ENCODE measurements at regions of chr3 and their contacts with region 1.

Region 1: GRCh38 chr3:36868614-36869436 is 76.0 kb downstream of the TRANK1 start:
- DNase-seq: peak; percentile 35 to 89
- H3K4me3 ChIP-seq: no peak overlapping the region
- H3K27ac ChIP-seq: no peak overlapping the region
- H3K4me1 ChIP-seq: no peaks in the 10 kb centered on the region
- H3K27me3 ChIP-seq: no peaks in the 10 kb centered on the region
- CTCF ChIP-seq: peak in 5 of 7 experiments; percentile 23 to 79 (median 71)
- EP300 ChIP-seq: no peak
- POLR2A ChIP-seq: no peak

Region 2: DNA sequence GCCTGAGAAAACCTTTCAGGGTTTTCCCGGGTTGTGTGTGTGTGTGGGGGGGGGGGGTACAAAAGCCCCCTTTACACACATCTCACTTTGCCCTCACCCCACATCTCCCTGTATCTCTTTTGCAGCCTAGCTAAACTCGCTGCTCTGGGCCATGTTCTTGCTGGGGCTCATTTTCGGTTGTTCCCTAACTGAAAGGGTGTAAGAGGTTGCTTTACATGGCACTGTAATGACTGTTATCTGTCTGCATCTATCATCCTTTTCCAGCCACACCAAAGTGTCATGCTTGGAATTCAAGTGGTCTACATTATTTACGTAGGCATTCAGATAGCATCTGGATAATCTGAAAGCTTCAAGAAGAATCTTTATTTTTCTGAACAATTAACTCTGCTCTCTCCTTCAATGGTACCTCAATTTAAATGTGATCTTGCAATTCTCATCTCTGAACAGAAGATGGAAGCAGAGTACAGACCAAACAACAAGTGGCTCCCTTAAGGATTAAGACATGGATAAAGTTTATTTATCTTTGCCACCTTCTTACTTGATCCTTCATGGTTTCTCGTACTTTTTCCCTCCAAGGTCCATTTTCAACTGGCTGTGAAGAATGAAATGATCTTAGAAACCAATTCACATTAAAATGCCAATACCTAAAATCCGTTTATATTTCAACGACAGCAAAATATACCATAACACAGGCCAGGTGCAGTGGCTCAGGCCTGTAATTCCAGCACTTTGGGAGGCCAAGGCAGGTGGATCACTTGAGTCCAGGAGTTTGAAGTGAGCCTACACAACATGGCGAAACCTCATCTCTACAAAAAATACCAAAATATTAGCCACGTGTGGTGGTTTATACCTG is 139.4 kb before region 1 on chr3:
- intact Hi-C with region 1: loop called (anchors 5 kb)
- DNase-seq: peak in 1 of 2 donors; percentile 78
- H3K4me3 ChIP-seq: no peak overlapping the region
- H3K27ac ChIP-seq: no peak overlapping the region
- H3K4me1 ChIP-seq: no peaks in the 10 kb centered on the region
- H3K27me3 ChIP-seq: peaks cover 0 to 9% (median 0%) of the 10 kb centered on the region in 3 donors
- CTCF ChIP-seq: peak in 5 of 7 experiments; percentile 41 to 71 (median 58)
- EP300 ChIP-seq: no peak
- POLR2A ChIP-seq: no peak

Region 3: GRCh38 chr3:37103103-37103808 is 234.4 kb after region 1 on chr3:
- intact Hi-C with region 1: no loop called
- DNase-seq: no peak
- H3K4me3 ChIP-seq: no peak overlapping the region
- H3K27ac ChIP-seq: no peak overlapping the region
- H3K4me1 ChIP-seq: peaks cover 0 to 8% (median 0%) of the 10 kb centered on the region in 4 donors
- H3K27me3 ChIP-seq: no peaks in the 10 kb centered on the region
- CTCF ChIP-seq: no peak
- EP300 ChIP-seq: no peak
- POLR2A ChIP-seq: no peak